ENCODE measurements at regions of chr14 and their contacts with region 1.

Region 1: GRCh38 chr14:86897704-86898513 is 1095.1 kb downstream of the GALC start:
- DNase-seq: peak; percentile 11
- H3K4me3 Mint-ChIP-seq: no peak overlapping the region
- H3K27ac Mint-ChIP-seq: peak overlapping the region; percentile 74
- H3K4me1 Mint-ChIP-seq: peaks cover 25% of the 10 kb centered on the region
- H3K27me3 Mint-ChIP-seq: no peaks in the 10 kb centered on the region
- CTCF ChIP-seq: no peak

Region 2: DNA sequence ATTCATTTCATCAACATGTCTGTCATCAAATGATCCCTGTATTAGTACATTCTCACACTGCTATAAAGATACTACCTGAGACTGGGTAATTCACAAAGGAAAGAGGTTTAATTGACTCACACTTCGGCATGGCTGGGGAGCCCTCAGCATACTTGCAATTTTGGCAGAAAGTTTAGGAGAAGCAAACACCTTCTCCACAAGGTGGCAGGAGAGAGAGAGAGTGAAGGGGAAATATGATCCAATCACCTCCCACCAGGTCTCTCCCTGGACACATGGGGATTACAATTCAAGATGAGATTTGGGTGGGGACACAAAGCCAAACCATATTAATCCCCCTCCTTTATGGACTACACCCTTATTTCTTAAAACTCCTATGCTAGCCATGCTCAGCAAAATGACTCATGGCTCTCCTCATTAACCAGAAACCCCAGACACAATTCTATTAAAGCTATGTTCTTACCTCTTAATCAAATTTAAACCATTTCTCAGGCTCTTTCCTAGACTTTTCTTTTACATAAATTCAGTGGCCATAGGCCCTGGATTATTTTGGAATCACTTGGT is 435.6 kb before region 1 on chr14:
- CTCF ChIA-PET with region 1: no interaction called
- intact Hi-C with region 1: loop called (anchors 5 kb)
- DNase-seq: peak; percentile 11
- H3K4me3 Mint-ChIP-seq: no peak overlapping the region
- H3K27ac Mint-ChIP-seq: no peak overlapping the region
- H3K4me1 Mint-ChIP-seq: no peaks in the 10 kb centered on the region
- H3K27me3 Mint-ChIP-seq: no peaks in the 10 kb centered on the region
- CTCF ChIP-seq: no peak

Region 3: GRCh38 chr14:86708846-86709339 is 189.0 kb before region 1 on chr14:
- CTCF ChIA-PET with region 1: no interaction called
- intact Hi-C with region 1: loop called (anchors 5 kb)
- DNase-seq: no peak
- H3K4me3 Mint-ChIP-seq: peak overlapping the region; percentile 39
- H3K27ac Mint-ChIP-seq: peak overlapping the region; percentile 59
- H3K4me1 Mint-ChIP-seq: peaks cover 40% of the 10 kb centered on the region
- H3K27me3 Mint-ChIP-seq: no peaks in the 10 kb centered on the region
- CTCF ChIP-seq: no peak

Region 4: GRCh38 chr14:86777950-86778602 is 119.8 kb before region 1 on chr14:
- CTCF ChIA-PET with region 1: no interaction called
- intact Hi-C with region 1: loop called (anchors 5 kb)
- DNase-seq: no peak
- H3K4me3 Mint-ChIP-seq: peak overlapping the region; percentile 15
- H3K27ac Mint-ChIP-seq: peak overlapping the region; percentile 82
- H3K4me1 Mint-ChIP-seq: peaks cover 45% of the 10 kb centered on the region
- H3K27me3 Mint-ChIP-seq: no peaks in the 10 kb centered on the region
- CTCF ChIP-seq: no peak

Region 5: GRCh38 chr14:86799244-86799647 is 98.7 kb before region 1 on chr14:
- CTCF ChIA-PET with region 1: no interaction called
- intact Hi-C with region 1: loop called (anchors 1 kb)
- DNase-seq: peak; percentile 58
- H3K4me3 Mint-ChIP-seq: no peak overlapping the region
- H3K27ac Mint-ChIP-seq: peak overlapping the region; percentile 77
- H3K4me1 Mint-ChIP-seq: peaks cover 42% of the 10 kb centered on the region
- H3K27me3 Mint-ChIP-seq: no peaks in the 10 kb centered on the region
- CTCF ChIP-seq: no peak

Region 6: GRCh38 chr14:86838363-86838762 is 59.5 kb before region 1 on chr14:
- CTCF ChIA-PET with region 1: no interaction called
- intact Hi-C with region 1: no loop called
- DNase-seq: no peak
- H3K4me3 Mint-ChIP-seq: no peak overlapping the region
- H3K27ac Mint-ChIP-seq: no peak overlapping the region
- H3K4me1 Mint-ChIP-seq: no peaks in the 10 kb centered on the region
- H3K27me3 Mint-ChIP-seq: no peaks in the 10 kb centered on the region
- CTCF ChIP-seq: no peak

Region 7: DNA sequence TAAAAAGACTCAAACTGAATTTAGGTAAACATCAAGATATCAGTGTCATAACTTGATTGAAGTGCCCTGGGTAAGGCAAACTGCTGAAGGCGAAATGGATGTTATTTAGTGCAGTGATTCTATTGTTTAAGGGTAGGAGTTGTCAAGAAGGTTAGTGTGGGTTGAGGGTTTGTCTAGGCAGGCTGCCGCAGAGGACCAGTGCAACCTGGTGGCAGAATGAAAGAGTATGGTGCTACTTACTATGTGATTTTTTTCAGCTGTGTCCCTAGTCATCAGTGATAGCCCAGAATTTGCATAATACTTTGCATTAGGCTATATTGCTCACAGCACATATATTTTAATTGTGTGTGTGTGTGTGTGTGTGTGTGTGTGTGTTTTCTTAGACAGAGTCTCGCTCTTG is 32.0 kb before region 1 on chr14:
- CTCF ChIA-PET with region 1: no interaction called
- intact Hi-C with region 1: loop called (anchors 2 kb)
- DNase-seq: no peak
- H3K4me3 Mint-ChIP-seq: no peak overlapping the region
- H3K27ac Mint-ChIP-seq: no peak overlapping the region
- H3K4me1 Mint-ChIP-seq: peaks cover 16% of the 10 kb centered on the region
- H3K27me3 Mint-ChIP-seq: no peaks in the 10 kb centered on the region
- CTCF ChIP-seq: no peak

Region 8: DNA sequence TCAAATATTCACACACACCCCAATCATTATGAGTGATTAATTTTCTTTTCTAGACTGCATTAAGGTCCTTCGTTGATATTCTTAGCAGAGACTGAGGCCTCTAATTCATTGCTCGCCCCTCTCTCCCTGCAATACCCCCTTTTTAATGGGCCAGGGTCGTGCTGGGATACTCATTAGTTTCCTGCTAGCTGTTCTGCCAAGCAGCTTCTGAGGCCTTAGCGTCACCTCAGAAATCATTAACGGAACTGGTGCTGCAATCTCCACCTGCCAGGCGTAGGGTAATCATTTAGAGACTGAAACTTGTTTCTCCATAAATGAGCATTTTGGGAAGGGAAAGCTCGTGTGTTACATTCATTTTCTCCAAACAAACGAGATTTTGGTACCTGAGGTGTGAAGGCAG is 40.4 kb after region 1 on chr14:
- CTCF ChIA-PET with region 1: no interaction called
- intact Hi-C with region 1: no loop called
- DNase-seq: peak; percentile 50
- H3K4me3 Mint-ChIP-seq: no peak overlapping the region
- H3K27ac Mint-ChIP-seq: peak overlapping the region; percentile 54
- H3K4me1 Mint-ChIP-seq: peaks cover 24% of the 10 kb centered on the region
- H3K27me3 Mint-ChIP-seq: no peaks in the 10 kb centered on the region
- CTCF ChIP-seq: no peak